B cell (primary cell): ENCODE measurements at regions of chr6 and their contacts with region 1.

Region 1: GRCh38 chr6:144284783-144285547 is at the start of gene UTRN:
- DNase-seq: peak; percentile 64
- ATAC-seq: peak; percentile 50
- H3K4me3 ChIP-seq: peak within 1 kb of the TSS; percentile 72 to 90 (median 77)
- H3K4me3 Mint-ChIP-seq: peak within 1 kb of the TSS; percentile 97
- H3K27ac ChIP-seq: no peak within 1 kb of the TSS
- H3K27ac Mint-ChIP-seq: peak within 1 kb of the TSS; percentile 53
- H3K4me1 ChIP-seq: peaks cover 20% of the 10 kb centered on the region in 2 donors
- H3K4me1 Mint-ChIP-seq: peaks cover 19% of the 10 kb centered on the region
- H3K27me3 ChIP-seq: peaks cover 0 to 23% (median 5%) of the 10 kb centered on the region in 4 experiments
- H3K27me3 Mint-ChIP-seq: peaks cover 21% of the 10 kb centered on the region
- CTCF ChIP-seq: no peak
- total RNA-seq, gene UTRN: 213 and 224 TPM in 2 replicates

Region 2: DNA sequence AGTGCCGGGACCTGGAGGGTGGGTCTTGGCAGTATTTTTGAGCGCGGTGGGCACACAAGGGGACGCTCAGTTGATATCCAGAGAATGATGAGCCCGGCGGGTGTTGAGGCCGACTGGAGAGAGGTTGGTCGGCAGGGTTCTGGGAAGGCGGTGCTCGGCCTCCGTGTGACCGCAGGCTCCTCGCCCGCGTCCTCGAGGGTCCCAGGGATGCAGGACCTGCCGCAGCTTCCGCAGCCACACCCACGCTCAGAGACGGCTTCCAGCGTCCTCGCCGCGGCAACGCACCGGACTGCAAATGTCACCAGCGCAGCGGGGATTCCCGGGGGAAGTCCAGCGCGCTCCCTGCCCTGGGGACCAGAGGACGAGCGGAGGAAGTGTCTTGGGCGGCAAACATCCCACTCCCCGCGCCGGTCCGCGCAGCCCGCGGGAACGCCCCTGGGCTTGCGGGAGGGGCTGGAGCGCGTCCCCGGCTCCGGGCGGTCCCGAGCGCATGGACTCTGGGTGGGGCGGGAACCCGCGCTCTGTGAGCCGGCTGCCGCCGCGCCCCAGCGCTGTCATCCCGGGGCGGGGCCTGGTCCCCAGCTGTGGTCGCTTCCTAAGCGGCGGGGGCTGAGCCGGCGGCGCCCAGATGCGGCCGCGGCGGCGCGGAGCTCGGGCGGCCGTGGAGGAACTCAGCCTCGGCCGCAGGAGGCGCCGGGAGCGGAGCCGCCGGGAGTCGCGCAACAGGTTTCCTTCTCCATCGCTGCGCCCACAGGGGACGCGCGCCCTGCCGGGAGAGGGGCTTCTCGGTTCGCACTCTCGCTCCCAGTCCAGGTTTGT is 134.9 kb before region 1 on chr6 and contains the start of gene STX11:
- CTCF ChIA-PET with region 1: no interaction called
- POLR2A ChIA-PET with region 1: no interaction called
- intact Hi-C with region 1: loop called (anchors 5 kb)
- DNase-seq: peak; percentile 85
- ATAC-seq: peak; percentile 75
- H3K4me3 ChIP-seq: peak within 1 kb of the TSS; percentile 54 to 96 (median 76)
- H3K4me3 Mint-ChIP-seq: peak within 1 kb of the TSS; percentile 96
- H3K27ac ChIP-seq: peak within 1 kb of the TSS; percentile 61 to 78
- H3K27ac Mint-ChIP-seq: peak within 1 kb of the TSS; percentile 97
- H3K4me1 ChIP-seq: peaks cover 9 to 15% of the 10 kb centered on the region in 2 donors
- H3K4me1 Mint-ChIP-seq: peaks cover 42% of the 10 kb centered on the region
- H3K27me3 ChIP-seq: no peaks in the 10 kb centered on the region
- H3K27me3 Mint-ChIP-seq: no peaks in the 10 kb centered on the region
- CTCF ChIP-seq: no peak
- total RNA-seq, gene STX11: 10.3 and 11.6 TPM in 2 replicates

Region 3: GRCh38 chr6:144305985-144306384 is 21.0 kb after region 1 on chr6:
- CTCF ChIA-PET with region 1: no interaction called
- POLR2A ChIA-PET with region 1: no interaction called
- intact Hi-C with region 1: loop called (anchors 2 kb)
- DNase-seq: no peak
- ATAC-seq: no peak
- H3K4me3 ChIP-seq: no peak overlapping the region
- H3K4me3 Mint-ChIP-seq: no peak overlapping the region
- H3K27ac ChIP-seq: no peak overlapping the region
- H3K27ac Mint-ChIP-seq: no peak overlapping the region
- H3K4me1 ChIP-seq: peaks cover 7 to 10% of the 10 kb centered on the region in 2 donors
- H3K4me1 Mint-ChIP-seq: peaks cover 8% of the 10 kb centered on the region
- H3K27me3 ChIP-seq: peaks cover 0 to 3% (median 0%) of the 10 kb centered on the region in 4 experiments
- H3K27me3 Mint-ChIP-seq: peaks cover 19% of the 10 kb centered on the region
- CTCF ChIP-seq: no peak

Region 4: DNA sequence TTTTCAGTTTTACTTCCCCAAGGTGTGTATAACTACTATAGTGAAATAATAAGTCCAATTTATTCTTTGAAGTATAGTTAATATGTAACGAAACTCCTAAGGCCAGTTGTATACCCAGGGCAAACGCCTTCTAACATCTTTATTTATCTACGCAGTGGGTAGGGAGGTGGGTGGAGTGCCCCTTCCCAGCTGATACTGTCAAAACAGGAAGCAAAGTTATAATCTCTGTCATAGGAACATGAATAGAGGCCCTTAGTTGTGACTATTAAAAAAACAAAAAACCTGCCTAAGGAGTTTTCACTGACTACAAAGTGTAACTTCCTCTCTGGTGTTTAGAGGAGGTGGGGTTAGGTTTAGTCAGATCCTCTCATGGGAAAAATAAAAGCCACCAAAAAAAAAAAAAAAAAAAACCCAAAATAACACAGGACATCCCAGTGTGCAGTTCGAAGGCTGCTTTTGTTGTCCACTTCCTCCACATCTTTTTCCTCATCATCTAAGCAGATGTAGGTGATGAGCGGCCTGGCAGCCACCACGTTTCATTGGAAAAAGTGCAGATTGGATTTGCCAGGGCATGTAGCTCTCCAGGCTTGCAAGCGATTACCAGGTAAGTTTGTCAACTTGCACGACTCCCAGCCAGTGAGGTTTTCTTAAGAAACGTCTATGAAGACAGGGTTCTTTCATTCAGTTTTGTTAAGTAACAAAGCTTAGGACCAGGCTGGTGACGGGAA is 58.9 kb after region 1 on chr6:
- CTCF ChIA-PET with region 1: interaction called, 3 read pairs
- POLR2A ChIA-PET with region 1: no interaction called
- intact Hi-C with region 1: loop called (anchors 2 kb)
- DNase-seq: peak; percentile 83
- ATAC-seq: peak; percentile 88
- H3K4me3 ChIP-seq: peak overlapping the region; percentile 59 to 95 (median 66)
- H3K4me3 Mint-ChIP-seq: peak overlapping the region; percentile 98
- H3K27ac ChIP-seq: peak overlapping the region; percentile 88 to 89
- H3K27ac Mint-ChIP-seq: peak overlapping the region; percentile 93
- H3K4me1 ChIP-seq: peaks cover 80 to 87% of the 10 kb centered on the region in 2 donors
- H3K4me1 Mint-ChIP-seq: peaks cover 89% of the 10 kb centered on the region
- H3K27me3 ChIP-seq: no peaks in the 10 kb centered on the region
- H3K27me3 Mint-ChIP-seq: no peaks in the 10 kb centered on the region
- CTCF ChIP-seq: no peak

Region 5: DNA sequence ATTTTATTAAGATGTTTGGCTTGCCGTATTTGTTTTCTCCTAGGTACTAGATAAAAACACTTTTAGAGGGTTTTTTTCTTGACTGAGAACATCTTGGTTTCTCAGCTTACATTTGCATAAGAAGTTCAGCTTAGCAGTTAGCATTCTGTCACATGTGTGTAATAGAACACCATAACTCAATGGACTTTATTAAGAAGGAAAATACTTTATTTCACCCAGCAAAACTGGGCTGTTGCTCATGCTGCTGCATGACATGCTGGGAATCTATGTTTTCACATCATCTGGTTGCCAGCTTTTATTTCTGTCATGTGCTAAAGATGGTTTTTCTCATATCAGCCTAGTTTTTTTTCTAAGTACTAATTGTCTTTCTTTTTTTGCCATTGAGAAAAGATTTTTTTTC is 144.8 kb after region 1 on chr6:
- CTCF ChIA-PET with region 1: no interaction called
- POLR2A ChIA-PET with region 1: no interaction called
- intact Hi-C with region 1: loop called (anchors 5 kb)
- DNase-seq: no peak
- ATAC-seq: no peak
- H3K4me3 ChIP-seq: no peak overlapping the region
- H3K4me3 Mint-ChIP-seq: no peak overlapping the region
- H3K27ac ChIP-seq: no peak overlapping the region
- H3K27ac Mint-ChIP-seq: no peak overlapping the region
- H3K4me1 ChIP-seq: no peaks in the 10 kb centered on the region
- H3K4me1 Mint-ChIP-seq: no peaks in the 10 kb centered on the region
- H3K27me3 ChIP-seq: no peaks in the 10 kb centered on the region
- H3K27me3 Mint-ChIP-seq: no peaks in the 10 kb centered on the region
- CTCF ChIP-seq: no peak